ENCODE measurements at regions of chr19 and their contacts with region 1.

Region 1: DNA sequence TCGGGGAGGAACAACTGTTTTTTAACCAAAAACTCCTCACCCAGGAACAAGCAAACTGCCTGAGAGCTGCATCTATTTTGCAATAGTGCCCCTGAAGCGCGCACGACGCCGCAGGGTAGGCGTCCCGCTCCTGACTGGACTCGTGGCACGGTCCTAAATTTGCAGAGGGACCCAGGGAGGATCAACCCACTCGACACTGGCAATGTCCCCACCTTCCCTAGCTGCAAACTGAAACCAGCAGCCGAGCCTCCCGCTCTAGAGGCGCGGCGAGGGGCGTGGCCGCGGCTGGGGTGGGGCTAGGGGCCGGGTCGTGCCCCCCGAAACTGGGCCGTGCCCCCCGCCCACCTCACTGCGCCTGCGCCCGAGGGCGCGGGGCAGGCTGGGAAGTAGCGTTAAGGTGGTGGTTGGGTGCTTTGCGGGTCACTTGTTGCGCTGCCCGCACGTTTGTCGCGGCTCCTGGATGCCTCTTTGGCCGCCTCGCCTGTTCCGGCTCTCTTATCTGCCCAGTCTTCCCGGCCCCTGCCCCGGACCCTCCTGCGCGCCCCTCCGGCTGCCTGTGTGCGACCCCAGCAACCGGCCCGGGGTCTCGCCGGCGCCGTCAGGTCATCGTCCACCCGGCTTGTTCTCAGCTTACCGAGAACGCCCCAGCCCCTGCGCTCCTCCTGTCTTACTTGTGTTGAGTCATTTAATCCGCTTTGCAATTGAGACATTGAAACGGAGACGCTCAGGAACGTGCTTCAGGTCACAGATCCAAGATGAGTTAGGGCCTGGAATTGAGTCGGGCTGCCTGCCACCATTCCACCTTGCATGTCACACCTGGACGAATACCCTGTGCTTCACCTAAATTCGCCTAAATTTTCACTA is 37.9 kb upstream of the LSM14A start:
- DNase-seq: peak; percentile 66
- ATAC-seq: peak; percentile 95
- H3K4me3 ChIP-seq: peak overlapping the region; percentile 82 to 88
- H3K27ac ChIP-seq: peak overlapping the region; percentile 85
- H3K4me1 ChIP-seq: peaks cover 8 to 22% of the 10 kb centered on the region in 2 experiments
- H3K27me3 ChIP-seq: no peaks in the 10 kb centered on the region
- CTCF ChIP-seq: no peak
- POLR2A ChIP-seq: peak; percentile 82
- RAD21 ChIP-seq: no peak

Region 2: GRCh38 chr19:34120846-34121639 is 13.4 kb before region 1 on chr19:
- CTCF ChIA-PET with region 1: interaction called, 5 read pairs
- POLR2A ChIA-PET with region 1: interaction called, 10 read pairs
- RAD21 ChIA-PET with region 1: no interaction called
- intact Hi-C with region 1: no loop called
- DNase-seq: peak; percentile 43
- ATAC-seq: peak; percentile 78
- H3K4me3 ChIP-seq: no peak overlapping the region
- H3K27ac ChIP-seq: no peak overlapping the region
- H3K4me1 ChIP-seq: no peaks in the 10 kb centered on the region
- H3K27me3 ChIP-seq: no peaks in the 10 kb centered on the region
- CTCF ChIP-seq: peak; percentile 71 to 83 (median 77)
- POLR2A ChIP-seq: no peak
- RAD21 ChIP-seq: peak; percentile 61

Measured in HCT116 (cell line).